ENCODE measurements at regions of chr10 and their contacts with region 1.

Region 1: GRCh38 chr10:120423431-120424197 is 33.4 kb upstream of the PLPP4 start:
- DNase-seq: peak; percentile 69
- H3K4me3 Mint-ChIP-seq: no peak overlapping the region
- H3K27ac Mint-ChIP-seq: no peak overlapping the region
- H3K4me1 Mint-ChIP-seq: no peaks in the 10 kb centered on the region
- H3K27me3 Mint-ChIP-seq: no peaks in the 10 kb centered on the region

Region 2: DNA sequence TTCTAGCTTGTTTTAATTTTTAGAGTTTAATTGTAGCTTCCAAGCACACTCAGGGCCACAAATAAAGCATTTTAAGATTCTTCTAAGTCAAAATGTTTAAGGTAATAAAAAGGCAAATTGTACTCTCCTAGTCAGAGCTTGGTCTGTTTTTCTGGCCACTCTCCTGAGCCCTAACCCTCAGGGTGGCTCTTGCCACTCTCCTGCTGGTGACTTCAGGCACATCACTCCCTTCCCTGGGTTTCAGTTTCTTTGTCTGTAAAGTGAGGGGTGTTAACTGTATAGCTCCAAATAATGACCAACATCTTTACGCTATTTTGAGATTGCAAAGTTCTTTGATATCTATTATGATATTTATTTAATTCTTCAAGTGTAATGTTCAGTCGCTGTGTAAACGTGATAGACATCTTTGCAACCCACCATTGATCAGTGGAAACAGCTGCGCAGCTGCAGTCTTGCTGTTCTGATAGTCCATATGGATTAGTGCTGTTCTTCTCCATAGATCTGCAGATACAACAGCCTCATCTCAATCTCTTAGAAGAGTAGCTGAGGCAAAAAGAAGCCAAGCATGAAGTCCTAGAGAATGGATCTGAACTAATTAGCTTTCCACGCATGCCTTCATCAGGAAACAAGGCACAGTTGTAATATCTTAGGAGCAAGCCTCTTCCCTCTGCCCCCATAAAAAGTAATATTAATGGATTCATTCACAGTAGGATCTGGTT is 223.3 kb after region 1 on chr10:
- intact Hi-C with region 1: no loop called
- DNase-seq: no peak
- H3K4me3 Mint-ChIP-seq: no peak overlapping the region
- H3K27ac Mint-ChIP-seq: no peak overlapping the region
- H3K4me1 Mint-ChIP-seq: no peaks in the 10 kb centered on the region
- H3K27me3 Mint-ChIP-seq: no peaks in the 10 kb centered on the region

Region 3: DNA sequence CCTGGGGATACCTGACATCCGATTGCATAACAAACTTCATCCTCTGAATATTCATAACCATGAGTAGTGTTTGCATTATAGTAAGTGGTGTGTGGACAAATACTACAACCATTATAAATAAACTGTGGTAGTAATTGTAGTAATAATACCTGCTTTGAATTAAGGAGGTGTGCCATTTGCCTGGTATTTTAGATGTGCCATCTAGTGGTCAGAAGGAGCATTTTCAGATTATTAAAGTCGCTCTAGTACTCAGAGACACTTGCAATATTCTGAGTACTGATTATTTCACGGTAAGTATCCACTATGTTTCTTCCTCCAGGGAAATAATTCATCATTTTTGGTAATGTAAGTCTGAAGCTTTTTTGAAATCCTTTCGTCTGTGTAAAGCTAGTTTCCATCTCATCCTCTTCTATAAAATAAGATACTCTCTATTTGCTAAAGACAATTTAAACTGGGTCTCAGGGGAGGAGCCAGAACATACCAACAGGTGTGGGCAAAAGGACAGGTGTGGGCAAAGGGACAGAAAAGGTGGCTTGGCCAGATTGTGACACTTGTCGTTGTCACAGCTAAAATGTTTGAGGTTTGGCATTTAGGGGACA is 312.3 kb after region 1 on chr10:
- intact Hi-C with region 1: loop called (anchors 2 kb)
- DNase-seq: no peak
- H3K4me3 Mint-ChIP-seq: no peak overlapping the region
- H3K27ac Mint-ChIP-seq: no peak overlapping the region
- H3K4me1 Mint-ChIP-seq: no peaks in the 10 kb centered on the region
- H3K27me3 Mint-ChIP-seq: no peaks in the 10 kb centered on the region

Measured in activated CD4-positive, alpha-beta T cell treated with anti-CD3 and anti-CD28 coated beads, Interleukin-2, amount 10 ng/mL, durations not matched to agents 24 days and 14 days (primary cell).